Endothelial cell of umbilical vein (primary cell): ENCODE measurements at regions of chr5 and their contacts with region 1.

Region 1: DNA sequence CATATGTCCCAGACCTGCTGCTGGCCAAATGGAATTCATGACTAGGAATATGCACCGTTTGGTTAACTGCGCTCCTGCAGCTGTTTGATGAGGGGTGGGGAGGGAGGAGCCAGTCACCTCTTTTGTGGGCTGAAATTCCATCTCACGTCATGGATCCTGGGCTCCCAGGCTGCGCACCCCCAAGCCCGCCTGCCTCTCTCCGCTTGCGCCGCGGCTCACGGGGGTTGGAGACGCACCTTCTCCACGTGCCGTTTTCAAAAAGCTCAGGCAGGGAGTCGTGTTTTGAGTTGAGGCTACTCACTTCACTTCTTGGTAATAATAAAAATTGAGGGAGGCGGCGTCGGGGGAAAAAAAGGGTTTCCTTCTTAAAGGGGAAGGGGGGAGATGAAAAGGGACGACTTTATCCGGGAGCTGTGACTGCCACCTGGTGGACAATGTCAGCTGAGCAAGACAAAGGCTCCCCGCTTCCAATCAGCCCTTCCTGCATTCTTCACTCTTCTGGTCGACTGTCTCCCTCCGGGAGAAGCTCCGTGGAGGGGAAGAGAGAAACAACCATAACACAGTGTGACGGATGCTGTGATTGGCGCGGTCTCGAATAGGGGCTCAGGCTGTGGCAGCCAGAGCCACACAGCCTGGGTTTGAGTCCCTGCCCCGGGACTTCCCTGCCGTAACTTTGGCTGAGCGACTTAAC is 15.9 kb upstream of the C5orf47 start:
- DNase-seq: peak; percentile 82
- H3K4me3 ChIP-seq: peak overlapping the region; percentile 36 to 59 (median 52)
- H3K27ac ChIP-seq: no peak overlapping the region
- H3K4me1 ChIP-seq: peaks cover 6% of the 10 kb centered on the region
- H3K27me3 ChIP-seq: peaks cover 0 to 2% of the 10 kb centered on the region in 2 experiments
- CTCF ChIP-seq: peak; percentile 83 to 87
- POLR2A ChIP-seq: no peak

Region 2: GRCh38 chr5:173581408-173582215 is 391.5 kb before region 1 on chr5:
- CTCF ChIA-PET with region 1: interaction called, 5 read pairs
- POLR2A ChIA-PET with region 1: no interaction called
- dilution Hi-C with region 1: no loop called
- intact Hi-C with region 1: loop called (anchors 1 kb)
- DNase-seq: peak; percentile 33
- H3K4me3 ChIP-seq: no peak overlapping the region
- H3K27ac ChIP-seq: no peak overlapping the region
- H3K4me1 ChIP-seq: no peaks in the 10 kb centered on the region
- H3K27me3 ChIP-seq: peaks cover 2 to 6% of the 10 kb centered on the region in 2 experiments
- CTCF ChIP-seq: peak; percentile 75 to 87
- POLR2A ChIP-seq: no peak

Region 3: GRCh38 chr5:173625696-173626504 is 347.2 kb before region 1 on chr5:
- CTCF ChIA-PET with region 1: interaction called, 150 read pairs
- POLR2A ChIA-PET with region 1: no interaction called
- dilution Hi-C with region 1: no loop called
- intact Hi-C with region 1: no loop called
- DNase-seq: no peak
- H3K4me3 ChIP-seq: no peak overlapping the region
- H3K27ac ChIP-seq: no peak overlapping the region
- H3K4me1 ChIP-seq: no peaks in the 10 kb centered on the region
- H3K27me3 ChIP-seq: peaks cover 3 to 5% of the 10 kb centered on the region in 2 experiments
- CTCF ChIP-seq: no peak
- POLR2A ChIP-seq: no peak

Region 4: DNA sequence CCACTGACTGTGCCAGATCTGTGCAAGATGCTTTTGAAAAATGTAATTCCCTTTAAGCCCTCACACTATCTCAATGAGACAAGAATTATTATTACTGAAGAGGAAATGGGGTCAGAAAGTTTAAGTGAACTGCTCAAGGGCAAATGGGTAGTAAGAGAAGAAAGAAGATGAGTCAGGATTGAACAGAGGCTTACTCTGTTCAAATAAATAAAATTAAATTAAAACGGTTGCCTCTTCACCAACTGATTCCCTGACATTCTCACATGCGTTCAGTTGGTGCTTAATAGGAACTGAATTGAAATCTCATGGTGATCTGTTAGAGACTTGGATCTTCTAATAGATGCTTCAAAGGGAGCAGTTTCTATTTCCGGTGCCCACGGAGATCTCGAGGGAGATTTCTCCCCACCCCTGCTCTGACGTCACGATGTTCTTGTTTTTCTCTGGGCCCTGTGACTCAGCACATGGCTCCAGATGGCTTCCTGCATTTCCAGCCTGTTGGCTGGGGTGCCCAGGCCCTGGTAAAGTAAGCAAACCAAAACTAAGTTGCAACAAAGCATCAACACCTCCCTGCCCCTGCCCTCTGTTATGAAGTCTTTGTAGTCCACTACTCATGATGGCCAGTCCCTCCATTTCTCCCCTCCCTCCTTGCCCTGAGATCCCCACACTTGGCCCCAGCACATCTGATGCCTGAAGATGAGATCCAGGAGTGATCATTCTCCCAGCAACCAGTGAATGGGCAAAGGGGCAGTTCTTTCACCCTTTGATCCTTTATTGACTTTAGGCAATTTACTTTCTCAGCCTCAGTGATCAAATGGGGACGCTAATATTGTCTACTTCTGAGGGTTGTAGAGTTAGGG is 191.0 kb before region 1 on chr5:
- CTCF ChIA-PET with region 1: interaction called, 3 read pairs
- POLR2A ChIA-PET with region 1: no interaction called
- dilution Hi-C with region 1: no loop called
- intact Hi-C with region 1: loop called (anchors 1 kb)
- DNase-seq: peak; percentile 94
- H3K4me3 ChIP-seq: no peak overlapping the region
- H3K27ac ChIP-seq: peak overlapping the region; percentile 99
- H3K4me1 ChIP-seq: peaks cover 34% of the 10 kb centered on the region
- H3K27me3 ChIP-seq: no peaks in the 10 kb centered on the region
- CTCF ChIP-seq: no peak
- POLR2A ChIP-seq: peak; percentile 42

Region 5: DNA sequence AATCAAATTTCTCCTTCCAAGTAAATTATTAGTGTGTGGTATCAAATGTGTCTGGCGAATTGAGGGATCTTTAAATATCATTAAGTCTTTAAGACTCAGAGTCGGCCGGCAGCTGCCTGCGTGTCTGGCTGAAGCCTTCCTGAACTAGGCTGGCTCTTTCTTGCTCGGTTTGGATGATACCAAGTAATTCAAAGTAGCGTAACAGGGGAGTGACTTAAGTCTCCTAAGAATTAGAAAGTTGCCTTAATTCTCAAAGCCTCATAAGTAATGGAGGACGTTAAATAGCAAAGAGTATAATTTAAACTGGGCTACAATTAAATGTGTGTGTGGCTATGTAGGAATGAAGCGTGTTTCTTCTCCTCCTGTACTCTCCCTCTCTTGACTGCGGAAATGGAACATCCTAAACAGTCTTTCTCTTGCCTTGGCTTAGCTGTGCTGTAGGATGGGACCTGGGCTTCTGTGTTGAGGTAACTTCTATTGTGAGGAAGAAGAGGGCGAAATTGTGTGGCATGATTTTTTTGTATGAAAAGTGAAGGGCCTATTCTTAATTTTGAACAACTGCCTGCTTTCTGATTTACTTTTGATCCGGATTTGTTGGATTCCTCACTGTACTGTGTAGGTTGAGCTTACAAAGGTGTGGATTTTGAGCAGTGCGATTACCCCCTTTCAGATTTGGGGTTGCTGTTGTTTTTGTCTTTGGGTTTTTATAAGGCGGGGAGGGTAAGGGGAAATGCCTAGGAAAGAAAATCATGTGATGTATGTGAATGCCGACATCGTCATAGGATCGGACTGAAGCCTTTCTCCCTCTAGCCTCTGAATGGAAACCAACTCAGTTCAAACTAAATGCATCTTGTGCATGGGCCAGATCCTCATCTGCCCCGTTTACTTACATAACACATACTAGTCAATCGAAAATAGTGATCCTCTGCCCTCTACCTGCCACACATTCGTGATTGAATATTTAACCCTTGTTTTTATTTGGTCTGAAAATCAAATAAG is 55.0 kb before region 1 on chr5:
- CTCF ChIA-PET with region 1: interaction called, 10 read pairs
- POLR2A ChIA-PET with region 1: no interaction called
- dilution Hi-C with region 1: no loop called
- intact Hi-C with region 1: loop called (anchors 1 kb)
- DNase-seq: peak; percentile 93
- H3K4me3 ChIP-seq: peak overlapping the region; percentile 44 to 93 (median 65)
- H3K27ac ChIP-seq: peak overlapping the region; percentile 99
- H3K4me1 ChIP-seq: peaks cover 28% of the 10 kb centered on the region
- H3K27me3 ChIP-seq: no peaks in the 10 kb centered on the region
- CTCF ChIP-seq: no peak
- POLR2A ChIP-seq: peak; percentile 94

Region 6: GRCh38 chr5:174177976-174178555 is 205.0 kb after region 1 on chr5:
- CTCF ChIA-PET with region 1: no interaction called
- POLR2A ChIA-PET with region 1: no interaction called
- dilution Hi-C with region 1: no loop called
- intact Hi-C with region 1: no loop called
- DNase-seq: no peak
- H3K4me3 ChIP-seq: no peak overlapping the region
- H3K27ac ChIP-seq: no peak overlapping the region
- H3K4me1 ChIP-seq: no peaks in the 10 kb centered on the region
- H3K27me3 ChIP-seq: no peaks in the 10 kb centered on the region
- CTCF ChIP-seq: no peak
- POLR2A ChIP-seq: no peak

Region 7: GRCh38 chr5:174311531-174312269 is 338.6 kb after region 1 on chr5:
- CTCF ChIA-PET with region 1: interaction called, 20 read pairs
- POLR2A ChIA-PET with region 1: no interaction called
- dilution Hi-C with region 1: no loop called
- intact Hi-C with region 1: loop called (anchors 1 kb)
- DNase-seq: peak; percentile 29
- H3K4me3 ChIP-seq: peak overlapping the region in 1 of 3 experiments; percentile 21
- H3K27ac ChIP-seq: no peak overlapping the region
- H3K4me1 ChIP-seq: no peaks in the 10 kb centered on the region
- H3K27me3 ChIP-seq: no peaks in the 10 kb centered on the region
- CTCF ChIP-seq: peak; percentile 76 to 83
- POLR2A ChIP-seq: no peak